CD4-positive, alpha-beta T cell (primary cell): ENCODE measurements at regions of chr3 and their contacts with region 1.

Region 1: GRCh38 chr3:120348981-120349818 is at the start of gene LRRC58:
- DNase-seq: peak; percentile 78 to 96 (median 87)
- ATAC-seq: peak; percentile 86
- H3K4me3 ChIP-seq: peak within 1 kb of the TSS; percentile 65
- H3K4me3 Mint-ChIP-seq: peak within 1 kb of the TSS; percentile 93
- H3K27ac ChIP-seq: peak within 1 kb of the TSS; percentile 65 to 74
- H3K27ac Mint-ChIP-seq: peak within 1 kb of the TSS; percentile 94
- H3K4me1 ChIP-seq: peaks cover 18% of the 10 kb centered on the region
- H3K4me1 Mint-ChIP-seq: peaks cover 52% of the 10 kb centered on the region
- H3K27me3 ChIP-seq: peaks cover 0 to 3% of the 10 kb centered on the region in 2 experiments
- H3K27me3 Mint-ChIP-seq: no peaks in the 10 kb centered on the region
- CTCF ChIP-seq: peak; percentile 45
- total RNA-seq, gene LRRC58: 16.6 to 17.7 TPM

Region 2: DNA sequence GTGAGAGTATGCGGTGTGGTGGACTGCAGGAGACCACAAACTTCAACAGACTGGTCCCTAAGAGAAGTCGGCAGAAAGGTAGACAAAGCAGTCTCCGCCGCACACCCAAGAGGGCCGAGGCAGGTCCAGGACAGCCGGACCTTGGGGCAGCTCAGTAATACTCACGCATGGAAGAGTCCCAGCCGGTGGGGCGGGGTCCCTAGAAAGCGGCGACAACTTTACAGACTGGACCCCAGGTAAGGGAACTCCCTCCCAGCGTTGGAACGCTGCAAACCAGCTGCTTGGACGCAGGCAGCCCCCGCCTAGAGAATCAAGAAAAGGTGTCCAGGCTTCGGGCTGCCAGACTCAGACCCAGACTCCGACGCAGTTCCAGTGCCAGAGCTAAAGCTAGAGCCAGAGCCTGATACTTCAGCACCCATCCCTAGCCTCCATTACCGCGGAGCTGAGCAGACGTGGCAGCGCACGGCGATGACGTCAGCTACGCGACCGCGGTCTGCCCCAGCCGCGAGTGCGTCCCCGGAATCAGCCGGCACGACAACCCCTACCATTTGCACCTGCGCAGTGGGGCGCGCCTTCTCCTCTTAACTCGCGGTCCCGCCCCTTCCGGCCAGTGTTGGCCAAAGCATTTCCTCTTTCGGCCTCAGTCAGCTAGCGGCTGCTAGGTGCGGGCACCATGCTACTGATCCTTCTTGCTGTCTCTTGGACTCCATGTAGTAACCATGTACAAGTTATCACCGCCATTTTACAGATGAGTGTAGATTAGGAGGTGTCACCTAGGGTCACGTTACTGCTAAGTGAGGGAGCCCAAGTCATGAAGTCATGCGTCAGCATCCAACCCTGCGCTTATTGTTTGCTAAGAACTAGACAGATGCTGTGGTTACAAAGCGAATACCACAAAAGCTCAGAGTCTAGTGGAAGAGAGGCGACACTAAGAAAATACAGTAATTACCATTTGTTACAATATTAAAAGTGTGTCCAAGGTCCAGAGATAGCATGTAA is 885.7 kb before region 1 on chr3 and contains the start of gene TMEM39A:
- CTCF ChIA-PET with region 1: no interaction called
- POLR2A ChIA-PET with region 1: interaction called, 3 read pairs
- intact Hi-C with region 1: loop called in 1 of 2 experiments (anchors 5 kb)
- DNase-seq: peak; percentile 97 to 100 (median 98)
- ATAC-seq: peak; percentile 87
- H3K4me3 ChIP-seq: peak within 1 kb of the TSS; percentile 90
- H3K4me3 Mint-ChIP-seq: peak within 1 kb of the TSS; percentile 93
- H3K27ac ChIP-seq: peak within 1 kb of the TSS; percentile 87 to 93
- H3K27ac Mint-ChIP-seq: peak within 1 kb of the TSS; percentile 97
- H3K4me1 ChIP-seq: peaks cover 28% of the 10 kb centered on the region
- H3K4me1 Mint-ChIP-seq: peaks cover 37% of the 10 kb centered on the region
- H3K27me3 ChIP-seq: no peaks in the 10 kb centered on the region
- H3K27me3 Mint-ChIP-seq: peaks cover 4% of the 10 kb centered on the region
- CTCF ChIP-seq: no peak
- total RNA-seq, gene TMEM39A: 54.1 to 58.0 TPM

Region 3: DNA sequence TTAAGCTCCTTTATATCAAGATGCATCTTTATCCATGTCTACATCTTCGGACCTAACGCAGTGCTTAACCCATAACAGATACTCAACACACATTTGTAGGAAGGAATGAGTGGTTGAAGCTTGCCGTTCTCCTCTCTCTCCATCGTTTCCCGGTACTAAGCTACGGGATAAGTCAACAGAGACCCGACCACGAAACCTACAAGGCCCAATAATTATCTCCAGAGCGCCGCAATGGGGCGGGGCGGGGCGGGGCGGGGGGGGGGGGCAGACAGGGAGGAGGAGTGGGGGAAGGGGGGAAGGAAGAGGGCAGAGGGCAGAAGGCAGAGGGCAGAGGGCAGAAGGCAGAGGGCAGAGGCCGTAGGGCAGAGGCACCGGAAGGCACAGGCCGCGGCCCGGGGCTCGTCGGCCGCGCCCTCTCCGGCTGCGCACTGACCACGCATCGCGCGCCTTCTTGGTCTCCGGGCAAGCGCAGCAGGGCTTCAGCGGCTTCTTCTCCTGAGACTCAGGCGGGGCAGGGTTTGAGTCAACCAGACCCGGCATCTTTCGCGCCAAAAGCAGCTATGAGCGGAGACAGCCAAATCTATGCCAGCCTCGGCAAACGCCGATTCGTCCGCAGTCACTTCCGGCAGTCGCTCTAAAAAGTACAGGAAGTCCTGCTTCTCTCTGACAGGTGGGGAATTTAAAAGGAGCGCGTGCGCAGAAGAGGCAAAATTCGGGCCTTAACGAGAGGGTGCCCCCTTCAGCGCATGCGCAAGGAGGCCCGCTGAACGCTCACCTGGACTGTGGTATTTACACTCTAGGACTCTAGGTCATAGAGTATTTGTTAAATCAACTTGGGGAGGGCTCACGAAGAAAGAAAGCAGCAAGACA is 672.2 kb before region 1 on chr3 and contains the start of gene COX17:
- CTCF ChIA-PET with region 1: no interaction called
- POLR2A ChIA-PET with region 1: no interaction called
- intact Hi-C with region 1: loop called in 1 of 2 experiments (anchors 10 kb)
- DNase-seq: peak; percentile 92 to 99 (median 95)
- ATAC-seq: peak; percentile 87
- H3K4me3 ChIP-seq: peak within 1 kb of the TSS; percentile 68
- H3K4me3 Mint-ChIP-seq: peak within 1 kb of the TSS; percentile 87
- H3K27ac ChIP-seq: peak within 1 kb of the TSS; percentile 81 to 85
- H3K27ac Mint-ChIP-seq: peak within 1 kb of the TSS; percentile 91
- H3K4me1 ChIP-seq: peaks cover 8% of the 10 kb centered on the region
- H3K4me1 Mint-ChIP-seq: peaks cover 36% of the 10 kb centered on the region
- H3K27me3 ChIP-seq: no peaks in the 10 kb centered on the region
- H3K27me3 Mint-ChIP-seq: no peaks in the 10 kb centered on the region
- CTCF ChIP-seq: no peak
- total RNA-seq, gene COX17: 24.6 to 26.3 TPM

Region 4: GRCh38 chr3:120417272-120417911 is 68.2 kb after region 1 on chr3:
- CTCF ChIA-PET with region 1: no interaction called
- POLR2A ChIA-PET with region 1: interaction called, 15 read pairs
- intact Hi-C with region 1: loop called in 1 of 2 experiments (anchors 5 kb)
- DNase-seq: peak; percentile 69 to 91 (median 76)
- ATAC-seq: peak; percentile 99
- H3K4me3 ChIP-seq: peak overlapping the region; percentile 51
- H3K4me3 Mint-ChIP-seq: peak overlapping the region; percentile 77
- H3K27ac ChIP-seq: no peak overlapping the region
- H3K27ac Mint-ChIP-seq: no peak overlapping the region
- H3K4me1 ChIP-seq: peaks cover 18% of the 10 kb centered on the region
- H3K4me1 Mint-ChIP-seq: peaks cover 14% of the 10 kb centered on the region
- H3K27me3 ChIP-seq: no peaks in the 10 kb centered on the region
- H3K27me3 Mint-ChIP-seq: peaks cover 5% of the 10 kb centered on the region
- CTCF ChIP-seq: peak; percentile 87

Region 5: GRCh38 chr3:120596116-120596852 is 247.1 kb after region 1 on chr3 and contains the start of gene NDUFB4:
- CTCF ChIA-PET with region 1: interaction called, 4 read pairs
- POLR2A ChIA-PET with region 1: interaction called, 15 read pairs
- intact Hi-C with region 1: loop called in 1 of 2 experiments (anchors 5 kb)
- DNase-seq: peak; percentile 87 to 99 (median 94)
- ATAC-seq: peak; percentile 87
- H3K4me3 ChIP-seq: peak within 1 kb of the TSS; percentile 88
- H3K4me3 Mint-ChIP-seq: peak within 1 kb of the TSS; percentile 98
- H3K27ac ChIP-seq: peak within 1 kb of the TSS; percentile 94 to 95
- H3K27ac Mint-ChIP-seq: no peak within 1 kb of the TSS
- H3K4me1 ChIP-seq: peaks cover 14% of the 10 kb centered on the region
- H3K4me1 Mint-ChIP-seq: peaks cover 8% of the 10 kb centered on the region
- H3K27me3 ChIP-seq: no peaks in the 10 kb centered on the region
- H3K27me3 Mint-ChIP-seq: no peaks in the 10 kb centered on the region
- CTCF ChIP-seq: no peak
- total RNA-seq, gene NDUFB4: 81.3 to 84.0 TPM